A549 (cell line): ENCODE measurements at regions of chr11 and their contacts with region 1.

Region 1: DNA sequence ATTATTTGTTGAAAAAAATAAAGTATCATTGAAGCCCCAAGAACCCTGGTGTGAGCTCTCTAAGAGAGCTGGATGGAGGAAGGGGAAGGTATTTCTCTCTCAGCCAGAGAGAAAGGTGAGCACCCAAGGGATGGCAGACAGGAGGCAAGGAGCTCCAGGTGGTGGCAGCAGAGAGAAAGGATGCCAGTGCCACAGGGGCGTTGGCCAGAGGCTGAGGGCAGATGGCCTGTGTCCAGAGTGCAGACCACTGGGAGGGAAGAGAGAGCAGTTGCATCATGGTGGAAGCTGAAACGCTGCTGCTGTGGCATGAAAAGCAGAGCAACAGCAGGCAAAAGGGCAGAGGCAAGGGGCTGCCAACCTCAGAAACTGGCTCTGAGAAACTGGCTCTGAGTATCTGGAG is 8.5 kb downstream of the SPON1 start:
- DNase-seq: peak; percentile 28 to 41
- ATAC-seq: peak; percentile 88 to 94
- H3K4me3 ChIP-seq: no peak overlapping the region
- H3K27ac ChIP-seq: no peak overlapping the region
- H3K4me1 ChIP-seq: 0 out of 3 replicates have a peak, but pooled peaks cover 2% of the 10 kb centered on the region
- CTCF ChIP-seq: peak; percentile 55
- EP300 ChIP-seq: no peak
- POLR2A ChIP-seq: no peak
- RAD21 ChIP-seq: peak; percentile 68 to 83

Region 2: GRCh38 chr11:13983081-13983751 is 12.2 kb after region 1 on chr11:
- CTCF ChIA-PET with region 1: interaction called, 22 read pairs
- POLR2A ChIA-PET with region 1: no interaction called
- DNase-seq: no peak
- ATAC-seq: no peak
- H3K4me3 ChIP-seq: no peak overlapping the region
- H3K27ac ChIP-seq: no peak overlapping the region
- H3K4me1 ChIP-seq: no peaks in the 10 kb centered on the region
- CTCF ChIP-seq: no peak
- EP300 ChIP-seq: no peak
- POLR2A ChIP-seq: no peak
- RAD21 ChIP-seq: no peak

Region 3: DNA sequence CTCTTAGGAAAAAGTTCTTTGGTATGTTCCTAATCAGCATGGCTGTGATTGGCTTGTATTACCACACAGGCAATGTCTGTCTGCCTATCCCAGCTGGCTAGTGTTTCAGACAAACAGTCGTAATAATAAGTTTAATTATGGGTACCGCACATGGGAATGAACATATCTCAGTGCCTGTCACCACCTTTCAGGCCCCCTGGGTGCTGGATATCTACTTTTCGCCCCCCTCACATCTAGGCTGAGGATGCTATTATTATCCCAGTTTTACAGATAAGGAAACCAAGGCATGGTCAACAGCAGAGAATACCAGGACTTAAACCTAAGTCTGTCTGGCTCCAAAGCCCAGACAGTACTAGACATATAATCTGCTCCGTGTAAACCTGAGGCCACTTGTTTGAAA is 166.3 kb after region 1 on chr11:
- CTCF ChIA-PET with region 1: no interaction called
- POLR2A ChIA-PET with region 1: no interaction called
- DNase-seq: no peak
- ATAC-seq: no peak
- H3K4me3 ChIP-seq: no peak overlapping the region
- H3K27ac ChIP-seq: no peak overlapping the region
- H3K4me1 ChIP-seq: no peaks in the 10 kb centered on the region
- CTCF ChIP-seq: no peak
- EP300 ChIP-seq: no peak
- POLR2A ChIP-seq: no peak
- RAD21 ChIP-seq: no peak

Region 4: DNA sequence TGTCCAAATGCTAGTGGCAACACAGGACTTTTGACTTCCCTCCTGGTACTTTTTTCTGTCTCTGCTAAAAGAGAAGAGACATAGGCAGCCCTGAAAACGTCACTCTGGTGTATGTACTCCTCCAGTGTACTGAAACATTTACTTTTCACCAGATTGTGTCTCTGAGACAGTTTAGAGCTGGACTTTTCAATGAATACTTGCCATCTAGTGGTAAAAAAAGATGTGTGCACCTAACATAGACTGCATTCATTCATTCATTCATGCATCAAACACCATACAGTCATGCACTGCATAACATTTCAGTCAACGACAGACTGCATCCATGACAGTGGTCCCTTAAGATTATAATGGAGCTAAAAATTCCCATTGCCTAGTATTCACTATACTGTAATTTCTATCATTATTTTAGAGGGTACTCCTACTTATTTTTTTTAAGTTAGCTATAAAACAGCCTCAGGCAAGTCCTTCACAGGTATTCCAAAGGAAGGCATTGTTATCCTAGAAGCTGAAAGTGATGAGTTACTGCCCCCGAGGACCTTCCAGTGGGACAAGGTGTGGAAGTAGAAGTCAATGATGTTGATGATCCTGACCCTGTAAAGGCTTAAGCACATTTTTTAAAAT is 177.8 kb after region 1 on chr11:
- CTCF ChIA-PET with region 1: interaction called, 28 read pairs
- POLR2A ChIA-PET with region 1: no interaction called
- DNase-seq: peak; percentile 10 to 46
- ATAC-seq: peak; percentile 88 to 93
- H3K4me3 ChIP-seq: no peak overlapping the region
- H3K27ac ChIP-seq: no peak overlapping the region
- H3K4me1 ChIP-seq: no peaks in the 10 kb centered on the region
- CTCF ChIP-seq: peak; percentile 58
- EP300 ChIP-seq: no peak
- POLR2A ChIP-seq: no peak
- RAD21 ChIP-seq: peak; percentile 67 to 68

Region 5: GRCh38 chr11:14249121-14249963 is 278.4 kb after region 1 on chr11:
- CTCF ChIA-PET with region 1: interaction called, 14 read pairs
- POLR2A ChIA-PET with region 1: no interaction called
- DNase-seq: peak; percentile 33 to 57
- ATAC-seq: peak; percentile 63 to 83
- H3K4me3 ChIP-seq: no peak overlapping the region
- H3K27ac ChIP-seq: no peak overlapping the region
- H3K4me1 ChIP-seq: no peaks in the 10 kb centered on the region
- CTCF ChIP-seq: peak; percentile 96
- EP300 ChIP-seq: no peak
- POLR2A ChIP-seq: no peak
- RAD21 ChIP-seq: peak; percentile 95 to 98